ENCODE measurements at regions of chr9 and their contacts with region 1.

Region 1: GRCh38 chr9:72022841-72023240 is 37.6 kb downstream of the C9orf57 start:
- DNase-seq: peak; percentile 8
- H3K4me3 ChIP-seq: no peak overlapping the region
- CTCF ChIP-seq: no peak

Region 2: GRCh38 chr9:71496310-71496709 is 526.5 kb before region 1 on chr9:
- in situ Hi-C with region 1: no loop called
- DNase-seq: no peak
- H3K4me3 ChIP-seq: no peak overlapping the region
- CTCF ChIP-seq: no peak

Region 3: DNA sequence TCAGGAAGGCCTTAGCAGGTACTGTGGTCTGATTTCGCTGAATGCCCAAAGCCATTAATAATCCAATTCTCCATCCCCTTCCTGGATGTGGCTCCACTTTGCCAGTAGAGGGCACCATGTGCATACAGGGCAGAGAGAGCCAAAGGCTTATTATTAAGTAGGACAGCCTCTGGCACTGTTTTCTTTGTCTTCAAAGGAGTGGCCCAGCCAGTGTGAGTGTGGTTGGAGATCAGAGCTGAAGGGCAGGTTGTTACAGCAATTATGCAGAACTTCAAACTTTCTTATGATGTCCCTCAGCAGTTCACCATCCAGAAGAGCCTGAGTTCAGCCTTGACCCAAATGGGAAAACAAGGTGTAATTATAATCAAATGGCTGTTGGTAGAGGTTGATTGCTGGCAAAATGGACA is 215.9 kb before region 1 on chr9:
- in situ Hi-C with region 1: loop called (anchors 10 kb)
- DNase-seq: peak; percentile 47
- H3K4me3 ChIP-seq: no peak overlapping the region
- CTCF ChIP-seq: peak; percentile 86